T-cell (primary cell): ENCODE measurements at regions of chr13 and their contacts with region 1.

Region 1: DNA sequence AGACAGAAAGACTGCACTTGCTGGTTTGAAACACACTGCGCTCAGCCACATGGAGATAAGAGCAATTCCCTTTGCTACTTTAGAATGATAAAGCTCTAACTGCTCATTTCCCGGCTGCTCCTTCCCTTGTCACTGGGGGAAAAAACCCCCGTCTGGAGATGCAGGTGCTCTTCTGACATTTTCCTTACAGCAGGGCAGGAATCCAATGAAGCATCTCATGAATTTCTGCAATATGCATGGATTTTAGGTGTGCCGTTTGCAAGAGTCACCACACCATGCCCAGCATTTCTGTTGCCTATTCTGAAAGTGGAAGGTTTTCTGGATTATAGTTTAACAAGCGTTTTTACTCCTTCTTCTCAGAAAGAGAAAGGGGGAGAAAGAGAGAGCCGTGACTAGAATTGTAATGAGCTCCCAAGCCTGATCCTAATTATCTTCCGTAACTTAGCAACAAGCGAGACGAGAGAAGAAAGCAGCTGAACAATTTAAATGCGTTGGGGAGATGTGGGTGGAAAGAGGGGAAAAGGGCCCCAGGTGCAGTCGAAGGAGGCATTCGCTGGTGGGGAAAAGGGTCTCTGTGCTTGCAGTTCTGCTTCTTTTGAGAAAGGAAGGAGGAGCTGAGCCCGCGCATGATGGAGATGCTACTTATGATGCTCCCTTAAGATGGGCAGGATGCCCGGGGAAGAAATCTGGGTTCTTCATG is 76.6 kb upstream of the SPATA13 start:
- DNase-seq: no peak
- ATAC-seq: no peak
- H3K4me3 ChIP-seq: no peak overlapping the region
- H3K4me3 Mint-ChIP-seq: no peak overlapping the region
- H3K27ac ChIP-seq: no peak overlapping the region
- H3K27ac Mint-ChIP-seq: no peak overlapping the region
- H3K4me1 ChIP-seq: no peaks in the 10 kb centered on the region
- H3K4me1 Mint-ChIP-seq: no peaks in the 10 kb centered on the region
- H3K27me3 ChIP-seq: peaks cover 0 to 16% of the 10 kb centered on the region in 2 experiments
- H3K27me3 Mint-ChIP-seq: peaks cover 4 to 6% of the 10 kb centered on the region in 2 donors

Region 2: DNA sequence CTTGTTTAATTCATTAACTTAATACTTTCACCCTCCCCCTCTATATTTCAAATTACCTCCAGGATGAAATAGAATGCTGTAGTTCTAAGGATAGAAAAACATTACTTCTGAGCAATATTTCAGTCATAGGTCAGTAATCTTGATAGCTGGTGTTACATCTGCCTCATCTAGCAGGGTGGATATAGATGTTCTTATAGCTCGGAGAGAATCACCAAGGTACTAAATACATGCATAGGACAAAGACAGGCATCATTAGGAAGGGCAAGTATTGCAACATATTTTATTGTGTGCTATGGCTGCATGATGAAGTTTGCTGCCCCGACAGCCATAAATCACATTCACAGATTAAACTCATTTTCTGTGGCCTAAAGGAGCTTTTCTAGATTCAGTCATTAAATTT is 1812.0 kb before region 1 on chr13:
- CTCF ChIA-PET with region 1: no interaction called
- POLR2A ChIA-PET with region 1: no interaction called
- DNase-seq: no peak
- ATAC-seq: no peak
- H3K4me3 ChIP-seq: no peak overlapping the region
- H3K4me3 Mint-ChIP-seq: no peak overlapping the region
- H3K27ac ChIP-seq: no peak overlapping the region
- H3K27ac Mint-ChIP-seq: no peak overlapping the region
- H3K4me1 ChIP-seq: no peaks in the 10 kb centered on the region
- H3K4me1 Mint-ChIP-seq: peaks cover 2 to 5% (median 4%) of the 10 kb centered on the region in 3 donors
- H3K27me3 ChIP-seq: peaks cover 0 to 3% of the 10 kb centered on the region in 2 experiments
- H3K27me3 Mint-ChIP-seq: no peaks in the 10 kb centered on the region

Region 3: GRCh38 chr13:23960566-23961156 is 123.2 kb before region 1 on chr13:
- CTCF ChIA-PET with region 1: no interaction called
- POLR2A ChIA-PET with region 1: no interaction called
- DNase-seq: peak in 1 of 35 experiments; percentile 37
- ATAC-seq: no peak
- H3K4me3 ChIP-seq: no peak overlapping the region
- H3K4me3 Mint-ChIP-seq: no peak overlapping the region
- H3K27ac ChIP-seq: no peak overlapping the region
- H3K27ac Mint-ChIP-seq: no peak overlapping the region
- H3K4me1 ChIP-seq: no peaks in the 10 kb centered on the region
- H3K4me1 Mint-ChIP-seq: peaks cover 0 to 7% (median 0%) of the 10 kb centered on the region in 3 donors
- H3K27me3 ChIP-seq: peaks cover 0 to 3% of the 10 kb centered on the region in 2 experiments
- H3K27me3 Mint-ChIP-seq: peaks cover 0 to 5% of the 10 kb centered on the region in 2 donors

Region 4: DNA sequence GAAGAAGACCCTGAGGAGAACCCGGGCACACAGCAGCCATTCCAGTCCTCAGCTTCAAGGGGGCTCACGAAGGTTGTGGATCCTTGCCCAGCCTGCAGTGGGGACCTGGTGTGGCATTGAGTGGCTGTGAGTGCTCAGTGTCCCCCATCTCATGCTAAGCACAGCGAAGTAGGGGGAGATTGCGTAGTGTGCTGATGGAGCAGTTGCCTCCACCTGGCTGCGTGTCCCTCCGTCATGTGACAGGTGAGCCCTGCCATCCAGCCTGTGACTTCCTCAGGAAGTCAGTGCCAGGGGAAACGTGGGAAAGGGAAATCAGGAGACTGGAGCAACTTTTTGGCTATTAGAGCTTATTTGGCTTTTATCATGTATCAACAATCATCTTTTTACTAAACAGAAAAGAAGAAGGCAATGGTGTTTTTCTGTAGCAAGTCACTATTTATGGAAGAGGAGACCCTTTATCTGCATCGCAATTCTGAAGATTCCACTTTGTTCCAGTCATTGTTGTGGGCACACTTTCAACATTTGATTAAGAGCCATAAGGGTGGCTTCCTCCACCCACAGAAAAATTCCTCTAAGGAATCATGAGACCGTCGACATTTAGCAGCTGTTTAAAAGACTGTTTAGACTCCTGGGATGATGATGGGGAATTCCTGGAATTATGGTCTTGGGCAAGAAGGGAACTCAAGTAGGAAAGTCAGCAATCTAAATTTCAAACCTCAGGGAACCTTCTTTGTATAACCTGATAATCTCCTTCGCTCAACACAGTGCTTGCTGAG is 50.2 kb before region 1 on chr13:
- CTCF ChIA-PET with region 1: no interaction called
- POLR2A ChIA-PET with region 1: no interaction called
- DNase-seq: no peak
- ATAC-seq: no peak
- H3K4me3 ChIP-seq: no peak overlapping the region
- H3K4me3 Mint-ChIP-seq: no peak overlapping the region
- H3K27ac ChIP-seq: no peak overlapping the region
- H3K27ac Mint-ChIP-seq: no peak overlapping the region
- H3K4me1 ChIP-seq: no peaks in the 10 kb centered on the region
- H3K4me1 Mint-ChIP-seq: peaks cover 0 to 5% (median 4%) of the 10 kb centered on the region in 3 donors
- H3K27me3 ChIP-seq: peaks cover 0 to 8% of the 10 kb centered on the region in 2 experiments
- H3K27me3 Mint-ChIP-seq: peaks cover 18 to 40% of the 10 kb centered on the region in 2 donors

Region 5: DNA sequence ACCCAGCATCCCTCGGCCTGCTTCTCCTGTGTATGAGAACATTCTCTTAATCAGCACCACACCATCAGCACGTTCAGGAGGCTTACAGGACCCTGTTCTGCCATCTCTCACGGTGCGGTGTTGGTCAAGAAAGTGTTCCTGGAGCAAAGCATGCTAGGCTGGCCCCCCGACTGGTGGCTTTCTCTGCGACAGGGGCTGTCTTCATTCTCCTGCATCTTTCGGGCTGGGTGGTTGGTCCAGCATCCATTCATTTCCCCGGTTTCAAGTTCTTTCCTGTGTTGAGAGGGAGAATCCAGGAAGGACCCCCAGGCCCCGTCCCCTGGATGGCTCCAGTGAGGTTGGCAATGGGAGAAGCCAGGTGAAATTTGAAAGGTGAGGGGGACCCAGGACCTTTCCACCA is 281.3 kb after region 1 on chr13:
- CTCF ChIA-PET with region 1: no interaction called
- POLR2A ChIA-PET with region 1: interaction called in 1 of 2 experiments, 10 read pairs
- DNase-seq: no peak
- ATAC-seq: no peak
- H3K4me3 ChIP-seq: no peak overlapping the region
- H3K4me3 Mint-ChIP-seq: no peak overlapping the region
- H3K27ac ChIP-seq: no peak overlapping the region
- H3K27ac Mint-ChIP-seq: no peak overlapping the region
- H3K4me1 ChIP-seq: no peaks in the 10 kb centered on the region
- H3K4me1 Mint-ChIP-seq: no peaks in the 10 kb centered on the region
- H3K27me3 ChIP-seq: no peaks in the 10 kb centered on the region
- H3K27me3 Mint-ChIP-seq: peaks cover 0 to 2% of the 10 kb centered on the region in 2 donors